ENCODE measurements at regions of chr9 and their contacts with region 1.

Region 1: GRCh38 chr9:12884737-12885414 is 110.1 kb downstream of the LURAP1L start:
- DNase-seq: no peak
- ATAC-seq: peak; percentile 95

Region 2: DNA sequence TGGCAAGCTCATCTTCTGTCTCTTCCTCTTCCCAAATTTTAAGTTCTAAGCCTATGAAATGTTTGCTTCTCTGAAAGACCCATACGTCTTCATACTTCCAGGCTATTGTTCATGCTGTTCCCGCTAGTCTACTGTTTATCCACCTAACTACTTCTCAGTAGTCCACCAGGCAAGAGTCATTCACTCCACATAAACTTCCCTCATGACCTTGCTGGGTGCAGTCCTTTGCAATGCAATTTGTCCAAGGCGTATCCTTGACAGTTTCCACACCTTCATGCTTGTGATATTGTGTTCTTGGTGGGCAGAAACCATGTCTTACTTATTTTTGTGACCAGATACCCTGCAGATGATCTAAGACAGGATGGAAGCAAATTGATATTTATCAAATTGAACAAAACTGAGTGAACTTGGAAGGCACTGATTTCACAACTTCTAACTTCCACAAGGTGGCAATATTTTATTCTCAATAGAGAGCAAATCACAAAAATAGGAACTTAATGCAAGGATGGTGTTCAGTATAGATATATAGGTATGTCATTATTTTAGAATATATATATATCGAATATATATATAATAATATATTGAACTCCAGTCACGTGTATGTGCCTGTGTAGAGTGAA is 161.4 kb before region 1 on chr9:
- intact Hi-C with region 1: loop called in 1 of 2 experiments (anchors 2 kb)
- DNase-seq: no peak
- ATAC-seq: peak; percentile 70

Region 3: GRCh38 chr9:12775679-12776512 is 109.0 kb before region 1 on chr9:
- intact Hi-C with region 1: loop called in 1 of 2 experiments (anchors 5 kb)
- DNase-seq: peak in 1 of 2 donors; percentile 73
- ATAC-seq: peak; percentile 90